IMR-90 (cell line): ENCODE measurements at regions of chr2 and their contacts with region 1.

Region 1: GRCh38 chr2:119801040-119801439 is 41.3 kb downstream of the PTPN4 start:
- DNase-seq: no peak
- ATAC-seq: no peak
- H3K4me3 ChIP-seq: no peak overlapping the region
- H3K27ac ChIP-seq: no peak overlapping the region
- H3K4me1 ChIP-seq: no peaks in the 10 kb centered on the region
- H3K27me3 ChIP-seq: no peaks in the 10 kb centered on the region
- CTCF ChIP-seq: no peak
- POLR2A ChIP-seq: no peak
- RAD21 ChIP-seq: no peak

Region 2: GRCh38 chr2:119759451-119760236 is 41.4 kb before region 1 on chr2 and contains the start of gene PTPN4:
- CTCF ChIA-PET with region 1: no interaction called
- POLR2A ChIA-PET with region 1: no interaction called
- dilution Hi-C with region 1: no loop called
- in situ Hi-C with region 1: no loop called
- intact Hi-C with region 1: loop called (anchors 5 kb)
- DNase-seq: peak; percentile 98
- ATAC-seq: peak; percentile 95
- H3K4me3 ChIP-seq: peak within 1 kb of the TSS; percentile 80
- H3K27ac ChIP-seq: peak within 1 kb of the TSS; percentile 79
- H3K4me1 ChIP-seq: no peaks in the 10 kb centered on the region
- H3K27me3 ChIP-seq: no peaks in the 10 kb centered on the region
- CTCF ChIP-seq: no peak
- POLR2A ChIP-seq: 0 out of 2 replicates have a peak, but pooled peaks have one; percentile 39
- RAD21 ChIP-seq: no peak
- total RNA-seq, gene PTPN4: 13.6 and 19.2 TPM in 2 replicates

Region 3: DNA sequence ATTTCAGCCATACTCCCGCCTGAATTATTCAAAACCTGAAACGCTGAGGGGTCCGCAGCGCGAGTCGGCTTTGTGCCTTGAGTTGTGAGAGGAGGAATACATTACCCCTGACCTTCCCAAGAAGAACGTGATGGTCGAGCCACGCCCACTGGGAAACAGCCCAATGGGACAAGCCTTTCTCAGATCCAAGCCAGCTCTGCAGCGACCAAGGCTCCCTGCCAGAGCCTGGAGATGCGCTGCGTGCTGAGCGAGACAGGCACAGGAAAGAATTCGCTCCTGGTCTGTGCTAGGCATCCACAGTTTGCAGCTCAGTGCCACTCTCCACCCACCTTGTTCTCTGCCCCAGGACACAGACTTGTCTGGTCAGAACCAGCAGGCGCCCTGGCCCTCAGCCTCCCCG is 860.5 kb after region 1 on chr2:
- CTCF ChIA-PET with region 1: no interaction called
- POLR2A ChIA-PET with region 1: no interaction called
- dilution Hi-C with region 1: no loop called
- in situ Hi-C with region 1: no loop called
- intact Hi-C with region 1: no loop called
- DNase-seq: no peak
- ATAC-seq: peak; percentile 62
- H3K4me3 ChIP-seq: no peak overlapping the region
- H3K27ac ChIP-seq: no peak overlapping the region
- H3K4me1 ChIP-seq: 0 out of 2 replicates have a peak, but pooled peaks cover 1% of the 10 kb centered on the region
- H3K27me3 ChIP-seq: peaks cover 5% of the 10 kb centered on the region; the same call in 1 of the 2 replicates
- CTCF ChIP-seq: no peak
- POLR2A ChIP-seq: no peak
- RAD21 ChIP-seq: no peak